ENCODE measurements at regions of chr1 and their contacts with region 1.

Region 1: DNA sequence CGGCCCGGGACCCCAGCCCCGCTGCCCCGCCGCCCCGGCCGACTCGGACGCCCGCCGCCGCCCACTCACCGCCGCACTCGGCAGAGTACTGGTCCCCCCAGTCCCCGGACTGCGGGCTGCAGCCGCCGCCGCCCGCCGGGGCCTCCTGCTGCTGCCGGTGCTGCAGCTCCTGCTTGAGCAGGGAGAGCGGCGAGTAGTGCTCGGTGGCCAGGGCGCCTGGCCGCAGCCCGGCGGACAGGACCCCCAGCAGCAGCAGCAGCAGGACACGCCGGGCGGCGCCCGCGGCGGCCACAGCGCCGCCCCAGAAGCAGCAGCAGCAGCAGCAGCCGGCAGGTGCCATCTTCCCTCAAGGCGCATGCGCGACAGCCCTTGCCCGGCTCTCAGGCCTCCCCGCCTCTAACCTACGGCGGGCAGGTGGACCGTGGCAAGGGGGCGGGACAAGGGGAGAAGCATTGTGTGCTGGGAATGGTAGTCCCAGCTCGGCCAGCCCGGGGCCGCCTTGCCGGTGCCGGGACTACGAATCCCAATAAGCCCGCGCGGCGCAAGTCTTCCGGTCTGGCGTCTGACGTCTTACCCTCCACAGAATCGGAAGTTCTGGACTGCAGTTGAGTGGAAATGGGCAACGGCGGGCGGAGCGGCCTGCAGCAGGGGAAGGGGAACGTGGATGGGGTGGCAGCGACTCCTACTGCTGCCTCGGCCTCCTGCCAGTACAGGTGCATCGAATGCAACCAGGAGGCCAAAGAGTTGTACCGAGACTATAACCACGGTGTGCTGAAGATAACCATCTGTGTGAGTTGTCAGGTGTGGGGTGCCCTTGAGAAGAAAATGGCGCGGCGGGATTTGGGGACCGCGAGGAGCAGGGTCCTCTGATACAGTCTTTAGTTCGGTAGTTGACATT is at the starts of genes ARV1 and TTC13:
- DNase-seq: peak; percentile 99
- ATAC-seq: peak; percentile 97
- H3K4me3 Mint-ChIP-seq: peak within 1 kb of the TSS; percentile 86
- H3K27ac Mint-ChIP-seq: peak within 1 kb of the TSS; percentile 98
- H3K4me1 Mint-ChIP-seq: peaks cover 32% of the 10 kb centered on the region
- H3K27me3 Mint-ChIP-seq: no peaks in the 10 kb centered on the region
- total RNA-seq, gene ARV1: 16.2 to 16.9 TPM
- total RNA-seq, gene TTC13: 13.6 to 16.2 TPM

Region 2: GRCh38 chr1:229341774-229342655 is 1636.7 kb before region 1 on chr1:
- CTCF ChIA-PET with region 1: no interaction called
- POLR2A ChIA-PET with region 1: no interaction called
- intact Hi-C with region 1: loop called in 1 of 2 experiments (anchors 5 kb)
- DNase-seq: peak; percentile 85
- ATAC-seq: peak; percentile 76
- H3K4me3 Mint-ChIP-seq: peak overlapping the region; percentile 88
- H3K27ac Mint-ChIP-seq: peak overlapping the region; percentile 77
- H3K4me1 Mint-ChIP-seq: peaks cover 45% of the 10 kb centered on the region
- H3K27me3 Mint-ChIP-seq: peaks cover 9% of the 10 kb centered on the region

Region 3: DNA sequence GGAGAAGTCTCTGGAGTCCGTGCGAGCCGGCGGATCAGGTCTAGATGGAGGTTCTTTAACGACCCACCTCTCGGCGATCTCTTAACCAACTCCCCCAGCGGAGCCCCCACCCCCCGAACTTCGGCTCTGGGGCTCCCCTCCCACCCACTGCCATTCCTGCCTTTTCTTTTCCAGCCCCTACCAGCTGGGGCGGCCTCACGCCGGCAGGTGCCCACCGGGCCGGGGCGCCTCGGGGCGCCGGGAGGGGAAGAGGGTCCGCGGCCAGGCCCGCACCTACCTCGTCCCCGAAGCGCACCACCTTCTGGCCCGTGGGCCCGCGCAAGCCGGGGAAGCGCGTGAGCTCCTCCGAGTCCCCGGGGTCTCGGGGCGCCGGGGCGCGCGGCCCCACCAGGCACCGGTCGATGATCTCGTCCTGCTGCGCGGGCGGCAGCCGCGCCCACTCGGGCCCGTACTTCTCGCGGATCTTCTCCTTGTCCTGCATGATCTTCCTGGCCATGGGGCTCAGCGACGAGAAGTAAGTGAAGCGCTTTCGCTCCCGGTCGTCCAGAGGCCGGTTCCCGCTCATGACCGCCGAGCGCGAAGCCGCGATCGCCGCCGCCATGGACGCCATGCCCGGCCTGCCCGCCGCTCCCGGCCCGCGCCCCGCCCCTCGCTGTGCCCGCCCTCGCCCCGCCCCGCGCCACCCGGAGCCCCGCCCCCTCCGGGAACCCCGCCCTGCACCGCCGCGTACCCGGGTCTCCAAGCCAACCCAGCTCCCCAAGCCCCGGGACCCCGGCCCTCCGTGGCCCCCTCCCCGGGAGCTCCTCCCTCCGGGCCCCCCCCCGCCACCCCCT is 110.6 kb before region 1 on chr1 and contains the start of gene C1orf198:
- CTCF ChIA-PET with region 1: interaction called, 3 read pairs
- POLR2A ChIA-PET with region 1: no interaction called
- intact Hi-C with region 1: loop called (anchors 1 to 5 kb)
- DNase-seq: peak; percentile 86
- ATAC-seq: peak; percentile 90
- H3K4me3 Mint-ChIP-seq: peak within 1 kb of the TSS; percentile 80
- H3K27ac Mint-ChIP-seq: peak within 1 kb of the TSS; percentile 21
- H3K4me1 Mint-ChIP-seq: peaks cover 22% of the 10 kb centered on the region
- H3K27me3 Mint-ChIP-seq: peaks cover 14% of the 10 kb centered on the region
- total RNA-seq, gene C1orf198: 5.8 to 6.9 TPM

Region 4: DNA sequence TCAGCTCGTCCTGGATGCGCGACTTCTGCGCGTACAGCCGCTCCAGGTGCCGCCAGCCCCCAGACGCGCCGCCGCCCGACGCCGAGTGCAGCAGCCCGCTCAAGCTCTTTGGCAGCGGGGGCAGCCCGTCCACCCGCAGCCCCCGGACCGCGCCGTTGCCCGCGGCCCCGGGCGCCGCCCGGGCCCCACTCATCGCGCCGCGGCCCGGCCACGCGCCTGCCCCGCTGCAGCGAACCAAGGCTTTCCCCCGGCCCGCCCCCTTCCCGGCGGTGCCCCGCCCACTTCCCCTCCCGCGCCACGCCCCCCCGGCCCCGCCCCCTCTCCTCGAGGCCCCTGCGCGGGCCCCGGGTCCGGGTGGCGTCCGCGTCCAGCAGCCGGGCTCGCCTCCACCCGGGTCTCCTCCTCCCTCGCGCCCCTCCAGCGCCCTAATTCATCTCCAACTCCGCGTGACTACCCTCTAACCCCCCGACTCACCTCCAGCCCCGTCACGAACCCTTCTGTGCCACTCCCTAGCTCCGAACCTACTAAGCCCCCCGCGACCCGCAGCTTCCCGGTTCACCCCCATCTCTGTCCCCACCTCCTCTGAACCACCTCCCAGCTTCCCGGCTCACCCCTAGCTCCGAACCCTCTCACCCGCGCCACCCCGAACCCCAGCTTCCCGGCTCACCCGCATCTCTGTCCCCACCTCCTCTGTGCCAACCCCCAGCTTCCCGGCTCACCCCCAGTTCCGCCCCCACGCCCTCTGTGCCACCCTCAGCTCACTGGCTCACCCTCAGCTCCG is 61.5 kb after region 1 on chr1 and contains the start of gene FAM89A:
- CTCF ChIA-PET with region 1: no interaction called
- POLR2A ChIA-PET with region 1: no interaction called
- intact Hi-C with region 1: loop called (anchors 1 to 2 kb)
- DNase-seq: peak; percentile 88
- ATAC-seq: peak; percentile 76
- H3K4me3 Mint-ChIP-seq: peak within 1 kb of the TSS; percentile 75
- H3K27ac Mint-ChIP-seq: peak within 1 kb of the TSS; percentile 37
- H3K4me1 Mint-ChIP-seq: peaks cover 35% of the 10 kb centered on the region
- H3K27me3 Mint-ChIP-seq: peaks cover 4% of the 10 kb centered on the region
- total RNA-seq, gene FAM89A: 14.5 to 14.9 TPM

Region 5: DNA sequence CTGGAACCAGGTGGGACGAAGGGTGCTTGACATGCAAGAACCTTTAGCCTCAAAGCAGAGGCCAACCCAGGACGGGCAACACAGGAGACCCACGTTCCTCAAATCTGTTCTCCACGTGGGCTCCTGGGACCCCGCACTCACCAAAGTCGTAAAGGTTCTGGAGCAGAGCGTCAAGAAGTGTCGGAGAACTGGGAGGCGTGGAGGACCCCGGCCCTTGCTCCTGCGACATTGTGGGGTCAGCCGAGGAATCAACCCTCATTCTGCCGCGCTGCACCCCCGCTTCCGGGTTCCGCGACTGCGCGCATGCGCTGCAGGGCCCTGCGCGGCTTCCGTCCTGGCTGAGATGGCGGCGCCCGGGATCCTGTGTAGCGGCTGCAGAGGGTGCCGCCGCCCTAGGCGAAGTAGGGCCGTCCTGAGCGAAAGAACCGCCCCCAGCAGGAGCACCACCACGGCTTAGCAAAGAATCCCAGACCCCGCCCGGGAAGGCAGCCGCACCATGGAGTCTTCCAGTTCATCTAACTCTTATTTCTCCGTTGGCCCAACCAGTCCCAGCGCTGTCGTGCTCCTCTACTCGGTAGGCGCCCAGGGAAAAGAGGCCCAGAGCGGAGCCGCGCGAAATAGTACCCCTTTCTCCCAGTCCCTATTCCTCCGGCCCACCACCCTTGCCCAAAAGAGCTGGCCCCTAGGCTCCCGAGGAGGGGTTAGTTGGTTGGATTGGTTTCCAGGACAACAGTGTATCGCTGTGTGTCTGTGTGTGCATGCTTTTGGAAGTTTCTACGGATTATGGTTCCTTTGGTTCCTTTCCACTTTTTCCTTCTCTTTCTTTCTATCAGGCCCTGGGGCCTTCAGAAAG is 262.4 kb after region 1 on chr1 and contains the start of gene GNPAT:
- CTCF ChIA-PET with region 1: no interaction called
- POLR2A ChIA-PET with region 1: no interaction called
- intact Hi-C with region 1: loop called (anchors 1 to 2 kb)
- DNase-seq: peak; percentile 94
- ATAC-seq: peak; percentile 98
- H3K4me3 Mint-ChIP-seq: peak within 1 kb of the TSS; percentile 98
- H3K27ac Mint-ChIP-seq: peak within 1 kb of the TSS; percentile 95
- H3K4me1 Mint-ChIP-seq: peaks cover 58% of the 10 kb centered on the region
- H3K27me3 Mint-ChIP-seq: no peaks in the 10 kb centered on the region
- total RNA-seq, gene GNPAT: 58.0 to 62.0 TPM

Region 6: DNA sequence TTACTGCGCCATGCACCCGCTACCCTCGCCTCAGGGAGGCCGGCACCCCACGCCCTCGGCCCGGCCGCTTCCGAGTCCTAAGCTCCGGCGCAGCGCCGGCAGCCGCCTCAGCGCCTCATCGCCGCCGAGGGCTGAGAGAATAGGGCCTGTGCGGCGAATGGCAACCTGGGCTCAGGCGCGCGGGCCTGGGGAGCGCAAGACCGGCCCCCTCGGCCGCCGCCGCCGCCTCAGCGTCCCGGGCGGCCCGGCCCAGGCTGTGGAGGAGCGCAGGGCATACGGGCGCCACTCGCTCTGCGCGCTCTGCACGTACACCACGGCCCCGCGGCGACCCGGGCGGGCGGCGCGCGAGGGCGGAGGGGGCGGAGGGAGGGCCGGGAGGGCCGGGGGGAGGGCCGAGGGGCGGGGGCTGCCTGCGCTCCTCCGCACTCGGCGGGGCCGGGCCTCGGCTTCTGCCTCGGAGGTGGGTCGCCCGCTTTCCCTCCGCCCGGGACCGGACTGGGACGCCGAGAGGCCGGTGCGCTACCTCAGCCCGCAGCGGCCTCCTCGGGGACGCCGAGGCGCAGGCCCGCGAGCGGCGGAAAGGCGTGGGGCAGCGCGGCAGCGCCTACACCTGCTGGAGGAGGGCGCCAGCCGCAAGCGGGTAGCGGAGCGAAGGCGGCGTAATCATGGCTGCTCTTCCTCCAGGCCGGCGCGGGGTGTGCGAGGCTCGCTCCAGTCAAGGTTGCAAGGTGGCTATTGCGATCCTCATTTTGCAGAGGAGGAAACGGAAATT is 443.4 kb after region 1 on chr1 and contains the start of gene EGLN1:
- CTCF ChIA-PET with region 1: no interaction called
- POLR2A ChIA-PET with region 1: no interaction called
- intact Hi-C with region 1: loop called in 1 of 2 experiments (anchors 5 kb)
- DNase-seq: peak; percentile 92
- ATAC-seq: peak; percentile 83
- H3K4me3 Mint-ChIP-seq: peak within 1 kb of the TSS; percentile 86
- H3K27ac Mint-ChIP-seq: peak within 1 kb of the TSS; percentile 88
- H3K4me1 Mint-ChIP-seq: peaks cover 31% of the 10 kb centered on the region
- H3K27me3 Mint-ChIP-seq: no peaks in the 10 kb centered on the region
- total RNA-seq, gene EGLN1: 31.5 to 43.7 TPM

Region 7: DNA sequence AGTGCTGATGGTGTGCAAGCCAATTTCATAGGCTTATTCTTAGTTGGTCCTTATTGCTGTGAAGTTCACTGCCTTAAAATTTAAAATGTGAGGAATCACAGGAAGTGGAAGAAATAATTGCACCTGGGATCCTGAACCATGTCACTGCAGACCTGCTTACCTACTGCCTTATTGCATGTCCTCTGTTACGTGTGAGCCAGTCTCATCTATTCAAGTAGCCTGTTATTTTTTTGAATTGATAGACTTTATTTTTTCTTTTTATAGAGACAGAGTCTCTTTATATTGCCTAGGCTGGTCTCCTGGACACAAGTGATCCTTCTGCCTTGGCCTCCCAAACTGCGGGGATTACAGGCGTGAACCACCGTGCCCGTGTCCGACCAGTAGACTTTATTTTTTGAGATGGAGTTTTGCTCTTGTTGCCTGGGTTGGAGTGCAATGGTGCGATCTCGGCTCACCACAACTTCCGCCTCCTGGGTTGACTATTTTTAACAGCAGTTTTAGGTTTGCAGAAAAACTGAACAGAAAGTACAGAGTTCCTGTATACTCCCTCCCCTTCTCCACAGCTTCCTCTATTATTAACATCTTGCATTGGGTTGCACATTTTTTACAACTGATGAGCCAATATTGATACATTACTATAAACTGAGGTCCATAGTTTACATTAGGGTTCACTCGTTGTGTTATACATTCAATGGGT is 633.8 kb after region 1 on chr1:
- CTCF ChIA-PET with region 1: no interaction called
- POLR2A ChIA-PET with region 1: no interaction called
- intact Hi-C with region 1: loop called in 1 of 2 experiments (anchors 10 kb)
- DNase-seq: peak; percentile 74
- ATAC-seq: peak; percentile 87
- H3K4me3 Mint-ChIP-seq: peak overlapping the region; percentile 65
- H3K27ac Mint-ChIP-seq: peak overlapping the region; percentile 81
- H3K4me1 Mint-ChIP-seq: peaks cover 49% of the 10 kb centered on the region
- H3K27me3 Mint-ChIP-seq: no peaks in the 10 kb centered on the region

Measured in activated CD4-positive, alpha-beta T cell treated with anti-CD3 and anti-CD28 coated beads for 36 hours (primary cell).